PC-9 (cell line): ENCODE measurements at regions of chr17 and their contacts with region 1.

Region 1: GRCh38 chr17:82494236-82495055 is 25.1 kb upstream of the FOXK2 start:
- DNase-seq: peak; percentile 84 to 90
- H3K4me3 ChIP-seq: no peak overlapping the region
- H3K27ac ChIP-seq: peak overlapping the region; percentile 43
- H3K4me1 ChIP-seq: peaks cover 13% of the 10 kb centered on the region
- H3K27me3 ChIP-seq: no peaks in the 10 kb centered on the region
- CTCF ChIP-seq: peak; percentile 79

Region 2: GRCh38 chr17:82351716-82352488 is 142.5 kb before region 1 on chr17:
- CTCF ChIA-PET with region 1: no interaction called
- POLR2A ChIA-PET with region 1: no interaction called
- intact Hi-C with region 1: loop called (anchors 10 kb)
- DNase-seq: peak; percentile 63 to 78
- H3K4me3 ChIP-seq: no peak overlapping the region
- H3K27ac ChIP-seq: no peak overlapping the region
- H3K4me1 ChIP-seq: no peaks in the 10 kb centered on the region
- H3K27me3 ChIP-seq: no peaks in the 10 kb centered on the region
- CTCF ChIP-seq: peak; percentile 81

Region 3: GRCh38 chr17:82400830-82401229 is 93.6 kb before region 1 on chr17:
- CTCF ChIA-PET with region 1: no interaction called
- POLR2A ChIA-PET with region 1: no interaction called
- intact Hi-C with region 1: no loop called
- DNase-seq: no peak
- H3K4me3 ChIP-seq: no peak overlapping the region
- H3K27ac ChIP-seq: no peak overlapping the region
- H3K4me1 ChIP-seq: no peaks in the 10 kb centered on the region
- H3K27me3 ChIP-seq: no peaks in the 10 kb centered on the region
- CTCF ChIP-seq: no peak

Region 4: GRCh38 chr17:82475458-82475857 is 19.0 kb before region 1 on chr17:
- CTCF ChIA-PET with region 1: no interaction called
- POLR2A ChIA-PET with region 1: interaction called, 22 read pairs
- intact Hi-C with region 1: no loop called
- DNase-seq: peak in 1 of 2 experiments; percentile 66
- H3K4me3 ChIP-seq: no peak overlapping the region
- H3K27ac ChIP-seq: no peak overlapping the region
- H3K4me1 ChIP-seq: no peaks in the 10 kb centered on the region
- H3K27me3 ChIP-seq: no peaks in the 10 kb centered on the region
- CTCF ChIP-seq: no peak

Region 5: DNA sequence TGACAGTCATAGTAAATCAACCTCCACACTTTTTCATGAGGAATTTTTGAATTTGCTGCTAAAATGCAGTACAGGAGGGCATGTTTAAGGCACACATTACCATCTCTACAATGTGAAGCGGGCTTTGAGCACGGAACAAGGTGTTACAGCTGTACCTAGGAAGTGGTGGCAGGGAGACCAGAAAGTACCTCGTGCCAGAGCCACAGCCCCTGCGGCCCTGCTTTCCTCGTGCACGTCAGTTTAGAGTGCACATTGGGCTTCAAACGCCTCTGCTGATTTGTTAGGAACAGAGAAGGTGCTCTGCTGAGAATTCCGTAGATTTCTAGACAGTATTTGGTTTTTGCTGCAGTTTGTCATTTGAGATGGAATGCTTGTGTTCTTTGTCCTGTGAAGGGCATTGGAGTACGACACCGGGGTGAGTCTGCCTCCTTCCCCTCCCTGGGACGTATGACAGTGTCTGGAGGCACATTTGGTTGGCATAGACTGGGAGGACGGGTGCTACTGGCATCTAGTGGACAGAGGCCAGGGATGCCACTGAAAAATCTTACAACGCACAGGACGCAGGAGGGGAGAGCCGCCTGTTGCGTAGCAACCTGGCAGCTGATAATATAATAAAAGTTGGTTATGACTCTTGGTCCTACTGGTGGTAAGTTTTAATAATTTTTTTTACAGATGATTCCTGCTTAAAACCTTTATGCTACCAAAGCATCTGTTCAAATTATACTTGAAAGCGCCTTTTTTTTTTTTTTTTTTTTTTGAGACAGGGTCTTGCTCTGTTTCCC is 34.2 kb after region 1 on chr17:
- CTCF ChIA-PET with region 1: no interaction called
- POLR2A ChIA-PET with region 1: interaction called, 33 read pairs
- intact Hi-C with region 1: loop called (anchors 2 kb)
- DNase-seq: peak; percentile 36 to 80
- H3K4me3 ChIP-seq: no peak overlapping the region
- H3K27ac ChIP-seq: no peak overlapping the region
- H3K4me1 ChIP-seq: no peaks in the 10 kb centered on the region; the same call in 1 of the 2 replicates
- H3K27me3 ChIP-seq: no peaks in the 10 kb centered on the region
- CTCF ChIP-seq: no peak

Region 6: DNA sequence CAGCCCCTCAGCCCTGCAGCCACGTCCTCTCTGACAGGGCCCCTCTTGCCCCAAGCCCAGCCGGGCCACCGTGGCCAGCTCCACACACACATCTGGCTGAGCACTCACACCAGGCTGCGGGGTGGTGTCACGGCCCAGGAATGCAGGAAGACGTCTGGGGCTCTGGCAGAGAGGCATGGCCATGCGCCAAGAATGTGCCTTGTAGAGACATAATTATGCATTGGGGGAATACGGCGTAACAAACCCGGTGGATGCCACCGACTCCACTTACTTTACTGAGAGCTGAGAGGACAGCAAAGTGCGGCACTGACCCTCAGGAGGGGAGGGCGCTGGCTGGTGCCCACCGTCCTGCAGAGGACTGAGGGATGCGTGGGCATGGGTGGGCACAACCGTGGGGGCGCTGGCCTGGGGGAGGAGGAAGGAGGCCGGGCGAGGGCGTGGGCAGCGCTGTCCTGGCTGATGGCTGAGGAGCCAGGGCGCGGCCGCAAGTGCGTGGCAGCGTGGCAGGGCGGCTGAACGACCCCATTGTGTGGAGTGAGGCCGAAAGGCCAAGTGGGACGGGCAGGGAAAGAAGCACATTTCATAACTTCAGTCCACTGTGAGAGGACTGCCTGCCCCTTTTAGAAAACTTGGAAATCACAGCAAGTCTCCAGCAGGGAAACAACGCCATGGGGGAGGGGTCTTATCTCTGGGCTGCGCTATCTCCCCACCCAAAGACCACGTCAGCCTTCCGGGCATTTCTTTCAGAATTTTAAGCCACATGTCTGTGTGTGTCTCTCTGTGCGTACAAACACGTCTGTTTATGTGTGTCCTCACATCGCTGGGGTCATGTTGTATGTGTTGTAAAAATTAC is 615.6 kb after region 1 on chr17:
- CTCF ChIA-PET with region 1: no interaction called
- POLR2A ChIA-PET with region 1: no interaction called
- intact Hi-C with region 1: no loop called
- DNase-seq: peak; percentile 87 to 94
- H3K4me3 ChIP-seq: peak overlapping the region; percentile 60
- H3K27ac ChIP-seq: peak overlapping the region; percentile 55
- H3K4me1 ChIP-seq: peaks cover 17% of the 10 kb centered on the region
- H3K27me3 ChIP-seq: no peaks in the 10 kb centered on the region
- CTCF ChIP-seq: no peak